ENCODE measurements at regions of chr4 and their contacts with region 1.

Region 1: DNA sequence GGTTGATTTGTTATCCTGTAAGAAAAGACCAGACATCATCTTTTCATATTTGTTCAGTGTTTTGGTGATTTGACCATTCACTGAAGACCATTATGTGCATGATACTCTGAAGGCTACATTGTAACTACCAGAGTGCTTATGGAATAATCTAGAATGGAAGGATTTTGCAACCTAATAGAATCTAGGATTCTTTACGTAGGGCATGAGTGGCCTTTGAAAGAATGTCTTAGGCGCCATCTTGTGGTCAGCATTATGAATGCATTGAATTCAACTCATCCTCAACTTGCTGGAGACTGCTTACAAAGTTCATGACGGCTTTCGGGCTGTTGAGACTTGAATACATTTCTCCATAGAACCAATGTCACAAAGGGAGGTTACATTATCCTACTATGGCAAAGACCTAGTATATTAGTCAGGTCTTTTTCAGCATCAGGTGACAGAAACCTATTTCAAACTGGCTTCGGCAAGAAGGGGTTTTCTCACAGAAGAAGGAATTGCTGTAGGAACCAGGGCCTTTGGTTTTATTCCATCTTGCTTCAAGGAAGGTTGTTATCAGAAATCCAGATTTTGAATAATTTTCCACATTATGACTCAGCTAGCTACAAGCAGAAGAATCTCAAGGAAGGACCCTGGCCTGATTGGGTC is 104.1 kb downstream of the GPAT3 start:
- DNase-seq: peak; percentile 81
- ATAC-seq: peak; percentile 71
- H3K4me3 ChIP-seq: no peak overlapping the region
- H3K4me3 Mint-ChIP-seq: no peak overlapping the region
- H3K27ac ChIP-seq: no peak overlapping the region
- H3K27ac Mint-ChIP-seq: no peak overlapping the region
- H3K4me1 ChIP-seq: no peaks in the 10 kb centered on the region
- H3K4me1 Mint-ChIP-seq: no peaks in the 10 kb centered on the region
- H3K27me3 ChIP-seq: peaks cover 0 to 2% (median 0%) of the 10 kb centered on the region in 4 experiments
- H3K27me3 Mint-ChIP-seq: peaks cover 4% of the 10 kb centered on the region
- CTCF ChIP-seq: peak; percentile 93

Region 2: GRCh38 chr4:83362492-83363329 is 277.3 kb before region 1 on chr4:
- CTCF ChIA-PET with region 1: interaction called, 5 read pairs
- POLR2A ChIA-PET with region 1: no interaction called
- intact Hi-C with region 1: loop called (anchors 1 kb)
- DNase-seq: peak; percentile 28
- ATAC-seq: peak; percentile 31
- H3K4me3 ChIP-seq: no peak overlapping the region
- H3K4me3 Mint-ChIP-seq: no peak overlapping the region
- H3K27ac ChIP-seq: no peak overlapping the region
- H3K27ac Mint-ChIP-seq: no peak overlapping the region
- H3K4me1 ChIP-seq: peaks cover 0 to 4% of the 10 kb centered on the region in 2 donors
- H3K4me1 Mint-ChIP-seq: peaks cover 7% of the 10 kb centered on the region
- H3K27me3 ChIP-seq: no peaks in the 10 kb centered on the region
- H3K27me3 Mint-ChIP-seq: no peaks in the 10 kb centered on the region
- CTCF ChIP-seq: peak; percentile 35

Region 3: GRCh38 chr4:83503974-83504373 is 136.0 kb before region 1 on chr4:
- CTCF ChIA-PET with region 1: interaction called, 86 read pairs
- POLR2A ChIA-PET with region 1: no interaction called
- intact Hi-C with region 1: loop called (anchors 1 kb)
- DNase-seq: no peak
- ATAC-seq: no peak
- H3K4me3 ChIP-seq: no peak overlapping the region
- H3K4me3 Mint-ChIP-seq: no peak overlapping the region
- H3K27ac ChIP-seq: no peak overlapping the region
- H3K27ac Mint-ChIP-seq: no peak overlapping the region
- H3K4me1 ChIP-seq: no peaks in the 10 kb centered on the region
- H3K4me1 Mint-ChIP-seq: peaks cover 3% of the 10 kb centered on the region
- H3K27me3 ChIP-seq: no peaks in the 10 kb centered on the region
- H3K27me3 Mint-ChIP-seq: no peaks in the 10 kb centered on the region
- CTCF ChIP-seq: no peak

Region 4: DNA sequence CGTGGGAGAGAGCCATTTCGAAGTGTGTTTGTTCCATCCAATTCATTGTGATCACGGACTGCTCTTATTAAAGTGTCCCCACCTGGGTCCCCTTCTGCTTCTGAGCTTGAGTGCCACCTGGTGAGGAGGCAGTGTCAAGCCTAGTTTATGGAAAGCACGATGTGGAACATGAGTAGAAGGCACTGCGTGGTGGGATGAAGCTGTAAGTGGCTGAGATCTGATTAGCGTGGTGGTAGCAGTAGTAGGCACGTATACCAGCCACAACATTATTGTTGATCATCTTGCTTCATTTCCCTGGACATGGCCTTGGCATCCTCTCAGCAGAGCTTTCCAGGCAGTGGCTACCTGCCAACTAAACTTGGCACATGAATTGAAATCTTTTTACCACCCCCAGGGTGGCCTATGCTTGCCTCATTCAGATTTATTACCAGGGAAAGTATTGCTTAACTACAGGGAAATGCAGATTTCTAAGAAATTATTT is 57.6 kb before region 1 on chr4:
- CTCF ChIA-PET with region 1: interaction called, 11 read pairs
- POLR2A ChIA-PET with region 1: no interaction called
- intact Hi-C with region 1: loop called (anchors 5 kb)
- DNase-seq: no peak
- ATAC-seq: peak; percentile 63
- H3K4me3 ChIP-seq: peak overlapping the region in 3 of 5 experiments; percentile 16 to 45 (median 33)
- H3K4me3 Mint-ChIP-seq: peak overlapping the region; percentile 75
- H3K27ac ChIP-seq: peak overlapping the region; percentile 28 to 39
- H3K27ac Mint-ChIP-seq: peak overlapping the region; percentile 80
- H3K4me1 ChIP-seq: peaks cover 14 to 17% of the 10 kb centered on the region in 2 donors
- H3K4me1 Mint-ChIP-seq: peaks cover 19% of the 10 kb centered on the region
- H3K27me3 ChIP-seq: no peaks in the 10 kb centered on the region
- H3K27me3 Mint-ChIP-seq: no peaks in the 10 kb centered on the region
- CTCF ChIP-seq: peak; percentile 22

Measured in B cell (primary cell).